Psoas muscle (tissue), 8 donors: ENCODE measurements at regions of chr2 and their contacts with region 1.

Region 1: GRCh38 chr2:237092920-237093781 is 7.5 kb downstream of the COPS8 start:
- DNase-seq: peak in 1 of 2 donors; percentile 67
- ATAC-seq: peak; percentile 63 to 75 (median 66)
- H3K4me3 ChIP-seq: peak overlapping the region; percentile 36
- H3K27ac ChIP-seq: peak overlapping the region; percentile 83
- H3K4me1 ChIP-seq: peaks cover 85% of the 10 kb centered on the region
- H3K27me3 ChIP-seq: no peaks in the 10 kb centered on the region
- CTCF ChIP-seq: peak; percentile 70

Region 2: DNA sequence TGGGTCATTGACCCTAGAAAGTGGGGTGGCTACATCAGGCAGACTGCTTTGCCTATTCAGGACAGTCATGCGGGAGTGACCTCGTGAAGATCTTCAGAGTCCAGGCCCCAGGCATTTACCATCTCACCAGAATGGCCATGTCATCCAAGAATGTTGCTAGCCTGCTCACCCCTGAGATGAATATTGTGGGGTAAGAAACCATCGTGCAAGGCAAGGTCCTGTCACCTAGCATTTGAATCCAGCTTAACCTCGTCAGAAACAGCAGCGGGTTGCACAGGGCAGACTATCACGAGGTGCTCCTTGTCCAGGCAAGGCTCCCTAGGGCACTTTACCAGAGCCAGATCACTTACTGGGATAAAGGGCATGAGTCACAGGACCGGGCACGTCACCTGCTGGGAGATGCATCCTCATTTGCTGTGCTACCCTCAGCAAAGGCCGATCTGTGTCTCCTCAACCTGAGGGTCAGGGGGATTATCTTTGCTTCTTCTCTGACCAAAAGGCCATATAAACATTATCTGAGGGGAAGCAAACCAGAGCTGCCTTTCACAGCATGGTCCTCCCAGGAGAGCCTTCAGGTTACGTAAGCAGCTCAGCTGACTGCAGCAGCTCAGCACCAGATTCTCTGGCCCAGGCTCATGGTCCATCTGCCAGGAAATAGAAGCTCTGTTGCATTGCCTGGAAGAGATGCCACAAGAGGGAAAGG is 361.1 kb before region 1 on chr2:
- intact Hi-C with region 1: no loop called
- DNase-seq: peak; percentile 79 to 90
- ATAC-seq: peak; percentile 93 to 97 (median 94)
- H3K4me3 ChIP-seq: no peak overlapping the region
- H3K27ac ChIP-seq: peak overlapping the region; percentile 88
- H3K4me1 ChIP-seq: peaks cover 28% of the 10 kb centered on the region
- H3K27me3 ChIP-seq: no peaks in the 10 kb centered on the region
- CTCF ChIP-seq: no peak

Region 3: GRCh38 chr2:237299906-237300305 is 206.8 kb after region 1 on chr2:
- intact Hi-C with region 1: loop called in 1 of 2 experiments (anchors 10 kb)
- DNase-seq: no peak
- ATAC-seq: peak; percentile 80 to 94 (median 90)
- H3K4me3 ChIP-seq: peak overlapping the region; percentile 41
- H3K27ac ChIP-seq: peak overlapping the region; percentile 62
- H3K4me1 ChIP-seq: peaks cover 24% of the 10 kb centered on the region
- H3K27me3 ChIP-seq: no peaks in the 10 kb centered on the region
- CTCF ChIP-seq: no peak

Region 4: DNA sequence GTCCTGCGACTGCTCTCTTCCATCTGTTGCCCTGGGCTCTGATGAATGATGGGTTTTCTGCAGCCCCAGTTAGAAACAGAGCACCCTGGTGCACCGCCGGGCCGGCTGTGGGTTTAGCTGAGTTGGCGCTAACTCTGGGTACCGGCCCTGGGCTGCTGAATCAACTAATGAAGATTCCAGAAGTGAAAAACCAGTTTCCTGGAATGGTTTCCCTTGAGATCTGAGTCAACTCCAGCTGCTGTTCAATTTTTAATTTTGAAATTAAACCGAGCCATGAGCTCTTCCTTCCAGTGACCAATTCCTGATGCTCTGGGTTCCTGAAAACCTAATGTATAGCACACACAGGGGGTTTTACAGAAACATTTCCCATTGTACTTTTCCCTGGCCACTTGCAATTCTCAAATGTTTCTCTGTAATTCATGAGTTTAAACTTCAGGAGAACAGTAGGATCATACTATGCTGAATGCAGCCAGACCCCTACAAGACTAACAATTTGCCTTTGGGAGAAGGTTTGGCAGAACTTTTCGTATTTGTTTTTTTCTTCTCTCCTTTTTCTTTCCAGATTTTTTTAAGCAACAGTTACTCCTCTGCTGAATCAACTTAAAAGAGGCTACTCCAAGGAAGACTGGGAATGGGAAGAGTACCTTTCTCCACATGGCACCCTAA is 315.3 kb after region 1 on chr2:
- intact Hi-C with region 1: loop called in 1 of 2 experiments (anchors 5 kb)
- DNase-seq: peak; percentile 56 to 70
- ATAC-seq: peak in 2 of 4 donors; percentile 8 to 11
- H3K4me3 ChIP-seq: peak overlapping the region; percentile 59
- H3K27ac ChIP-seq: peak overlapping the region; percentile 50
- H3K4me1 ChIP-seq: peaks cover 21% of the 10 kb centered on the region
- H3K27me3 ChIP-seq: no peaks in the 10 kb centered on the region
- CTCF ChIP-seq: no peak

Region 5: DNA sequence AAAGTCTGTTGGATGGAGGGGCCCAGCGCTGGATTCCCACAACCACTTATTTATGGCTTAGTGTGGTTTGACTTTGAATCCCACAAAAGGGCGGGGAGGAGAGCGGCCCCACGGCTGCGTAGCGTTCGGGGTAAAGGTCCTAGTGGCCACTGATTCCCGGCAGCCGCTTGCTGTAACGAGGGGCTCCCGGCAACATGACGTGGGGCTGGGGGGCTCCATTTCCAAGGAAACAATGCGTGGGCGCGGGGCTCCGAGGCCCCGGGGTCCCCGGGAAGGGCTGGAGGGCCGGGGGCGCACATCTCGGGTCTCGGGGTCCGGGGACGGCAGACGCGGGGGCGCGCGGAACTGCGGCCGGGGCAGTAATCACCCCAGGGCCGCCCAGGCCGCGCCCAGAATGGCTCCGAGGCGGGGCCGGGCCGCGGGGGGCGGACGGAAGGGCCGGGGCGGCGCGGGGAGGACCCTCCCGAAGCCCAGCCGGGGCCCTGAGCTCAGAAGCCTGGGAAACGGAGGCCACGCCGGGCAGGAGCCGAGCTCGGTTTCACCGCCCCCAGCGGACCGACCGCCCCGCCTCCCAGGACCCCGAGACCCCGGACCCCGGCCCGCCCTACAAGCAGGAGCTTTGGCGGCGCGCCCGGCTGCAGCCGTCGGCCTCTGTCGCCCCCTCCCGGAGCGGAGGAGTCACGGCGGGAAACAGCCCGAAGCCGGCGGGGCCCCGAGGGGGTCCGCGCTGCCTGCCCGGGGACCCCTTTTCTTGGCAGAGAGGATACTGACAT is 382.0 kb after region 1 on chr2:
- intact Hi-C with region 1: loop called in 1 of 2 experiments (anchors 2 kb)
- DNase-seq: peak; percentile 85 to 93
- ATAC-seq: peak; percentile 78 to 87 (median 83)
- H3K4me3 ChIP-seq: peak overlapping the region; percentile 90
- H3K27ac ChIP-seq: peak overlapping the region; percentile 90
- H3K4me1 ChIP-seq: peaks cover 18% of the 10 kb centered on the region
- H3K27me3 ChIP-seq: peaks cover 0 to 8% (median 0%) of the 10 kb centered on the region in 3 donors
- CTCF ChIP-seq: peak; percentile 90

Region 6: DNA sequence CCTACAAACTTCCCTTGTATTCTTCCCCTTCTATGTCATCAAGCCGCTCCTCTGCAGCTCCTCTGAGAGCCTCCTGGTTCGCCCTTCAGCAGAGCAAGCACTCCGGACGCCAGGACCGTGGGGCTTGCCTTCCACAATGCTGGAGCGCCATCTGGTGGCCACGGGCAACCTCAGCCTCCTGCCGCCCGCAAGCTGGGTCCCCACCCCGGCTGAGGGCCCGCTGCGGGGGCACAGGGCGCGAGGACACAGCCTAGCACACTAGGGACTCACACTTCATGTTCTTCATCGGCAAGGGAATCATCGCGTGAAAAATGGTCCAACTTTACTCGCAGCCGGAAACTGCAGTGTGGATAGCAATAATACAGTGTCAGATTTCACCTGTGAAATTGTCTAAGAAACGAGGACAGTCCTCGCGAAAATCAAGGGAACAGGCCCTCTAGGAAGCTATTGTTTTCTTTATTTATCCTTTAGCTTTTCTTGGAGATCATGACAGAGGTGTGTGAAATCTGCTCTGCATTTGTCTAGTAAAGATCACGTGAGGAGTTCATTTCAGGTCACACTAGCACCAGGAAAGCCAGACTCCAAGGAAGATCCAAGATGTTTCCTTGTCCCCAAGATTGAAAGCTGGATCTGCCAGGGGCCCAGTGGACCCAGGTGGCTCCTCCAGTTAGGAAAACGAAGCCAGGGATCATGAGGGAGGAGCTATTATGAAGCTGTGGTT is 479.0 kb after region 1 on chr2:
- intact Hi-C with region 1: loop called in 1 of 2 experiments (anchors 2 kb)
- DNase-seq: peak; percentile 92 to 96
- ATAC-seq: peak; percentile 93 to 97 (median 94)
- H3K4me3 ChIP-seq: peak overlapping the region; percentile 43
- H3K27ac ChIP-seq: no peak overlapping the region
- H3K4me1 ChIP-seq: peaks cover 3% of the 10 kb centered on the region
- H3K27me3 ChIP-seq: no peaks in the 10 kb centered on the region
- CTCF ChIP-seq: peak; percentile 100

Region 7: GRCh38 chr2:237895544-237896506 is 802.7 kb after region 1 on chr2:
- intact Hi-C with region 1: loop called in 1 of 2 experiments (anchors 10 kb)
- DNase-seq: peak; percentile 76 to 93
- ATAC-seq: peak; percentile 75 to 85 (median 82)
- H3K4me3 ChIP-seq: peak overlapping the region; percentile 41
- H3K27ac ChIP-seq: peak overlapping the region; percentile 98
- H3K4me1 ChIP-seq: peaks cover 63% of the 10 kb centered on the region
- H3K27me3 ChIP-seq: no peaks in the 10 kb centered on the region
- CTCF ChIP-seq: no peak